GM12878 (cell line): ENCODE measurements at regions of chr3 and their contacts with region 1.

Region 1: GRCh38 chr3:36957862-36958686 is 13.2 kb upstream of the TRANK1 start:
- DNase-seq: no peak
- ATAC-seq: peak; percentile 20; the same call in 2 of the 3 replicates
- H3K4me3 ChIP-seq: no peak overlapping the region
- H3K27ac ChIP-seq: no peak overlapping the region
- H3K4me1 ChIP-seq: no peaks in the 10 kb centered on the region
- H3K27me3 ChIP-seq: no peaks in the 10 kb centered on the region
- CTCF ChIP-seq: no peak
- EP300 ChIP-seq: no peak
- POLR2A ChIP-seq: no peak
- RAD21 ChIP-seq: no peak

Region 2: DNA sequence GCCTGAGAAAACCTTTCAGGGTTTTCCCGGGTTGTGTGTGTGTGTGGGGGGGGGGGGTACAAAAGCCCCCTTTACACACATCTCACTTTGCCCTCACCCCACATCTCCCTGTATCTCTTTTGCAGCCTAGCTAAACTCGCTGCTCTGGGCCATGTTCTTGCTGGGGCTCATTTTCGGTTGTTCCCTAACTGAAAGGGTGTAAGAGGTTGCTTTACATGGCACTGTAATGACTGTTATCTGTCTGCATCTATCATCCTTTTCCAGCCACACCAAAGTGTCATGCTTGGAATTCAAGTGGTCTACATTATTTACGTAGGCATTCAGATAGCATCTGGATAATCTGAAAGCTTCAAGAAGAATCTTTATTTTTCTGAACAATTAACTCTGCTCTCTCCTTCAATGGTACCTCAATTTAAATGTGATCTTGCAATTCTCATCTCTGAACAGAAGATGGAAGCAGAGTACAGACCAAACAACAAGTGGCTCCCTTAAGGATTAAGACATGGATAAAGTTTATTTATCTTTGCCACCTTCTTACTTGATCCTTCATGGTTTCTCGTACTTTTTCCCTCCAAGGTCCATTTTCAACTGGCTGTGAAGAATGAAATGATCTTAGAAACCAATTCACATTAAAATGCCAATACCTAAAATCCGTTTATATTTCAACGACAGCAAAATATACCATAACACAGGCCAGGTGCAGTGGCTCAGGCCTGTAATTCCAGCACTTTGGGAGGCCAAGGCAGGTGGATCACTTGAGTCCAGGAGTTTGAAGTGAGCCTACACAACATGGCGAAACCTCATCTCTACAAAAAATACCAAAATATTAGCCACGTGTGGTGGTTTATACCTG is 228.6 kb before region 1 on chr3:
- CTCF ChIA-PET with region 1: interaction called, 68 read pairs
- POLR2A ChIA-PET with region 1: no interaction called
- RAD21 ChIA-PET with region 1: interaction called, 16 read pairs
- SMC1A ChIA-PET with region 1: interaction called, 25 read pairs
- in situ Hi-C with region 1: loop called (anchors 5 kb)
- intact Hi-C with region 1: loop called (anchors 1 kb)
- DNase-seq: no peak
- ATAC-seq: peak; percentile 77
- H3K4me3 ChIP-seq: no peak overlapping the region
- H3K27ac ChIP-seq: no peak overlapping the region
- H3K4me1 ChIP-seq: no peaks in the 10 kb centered on the region
- H3K27me3 ChIP-seq: no peaks in the 10 kb centered on the region
- CTCF ChIP-seq: peak; percentile 56 to 79 (median 65)
- EP300 ChIP-seq: no peak
- POLR2A ChIP-seq: no peak
- RAD21 ChIP-seq: peak; percentile 90

Region 3: DNA sequence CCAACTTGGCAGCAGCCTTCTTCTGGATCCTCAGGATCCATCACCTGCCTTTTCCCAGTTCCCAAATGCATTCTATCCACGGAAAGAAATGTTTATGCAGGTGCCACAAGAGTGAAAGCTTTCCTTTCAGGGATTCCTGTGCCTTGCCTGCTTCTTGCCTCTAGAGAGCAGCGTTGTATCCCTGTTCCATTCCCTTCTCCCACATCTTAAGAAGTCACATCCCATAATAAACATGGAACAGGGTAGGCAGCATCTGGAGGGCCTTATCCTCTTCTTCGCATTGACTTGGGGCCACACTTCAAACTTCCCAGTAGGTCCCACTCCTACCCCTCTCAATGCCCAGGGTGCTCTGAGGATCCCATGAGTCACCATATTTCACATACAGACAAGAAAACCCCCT is 121.0 kb before region 1 on chr3:
- CTCF ChIA-PET with region 1: interaction called, 16 read pairs
- POLR2A ChIA-PET with region 1: no interaction called
- RAD21 ChIA-PET with region 1: interaction called, 5 read pairs
- SMC1A ChIA-PET with region 1: interaction called, 5 read pairs
- in situ Hi-C with region 1: no loop called
- intact Hi-C with region 1: no loop called
- DNase-seq: no peak
- ATAC-seq: no peak
- H3K4me3 ChIP-seq: no peak overlapping the region
- H3K27ac ChIP-seq: no peak overlapping the region
- H3K4me1 ChIP-seq: no peaks in the 10 kb centered on the region
- H3K27me3 ChIP-seq: no peaks in the 10 kb centered on the region
- CTCF ChIP-seq: peak in 2 of 3 experiments; percentile 9 to 28; a peak in 1 of 6 replicates
- EP300 ChIP-seq: no peak
- POLR2A ChIP-seq: no peak
- RAD21 ChIP-seq: peak; percentile 32

Region 4: GRCh38 chr3:36876181-36876936 is 81.7 kb before region 1 on chr3:
- CTCF ChIA-PET with region 1: interaction called, 54 read pairs
- POLR2A ChIA-PET with region 1: interaction called, 4 read pairs
- RAD21 ChIA-PET with region 1: interaction called, 17 read pairs
- SMC1A ChIA-PET with region 1: interaction called, 24 read pairs
- in situ Hi-C with region 1: no loop called
- intact Hi-C with region 1: no loop called
- DNase-seq: peak; percentile 89
- ATAC-seq: peak; percentile 99
- H3K4me3 ChIP-seq: peak overlapping the region; percentile 12; the same call in 1 of the 2 replicates
- H3K27ac ChIP-seq: peak overlapping the region; percentile 45; the same call in 1 of the 2 replicates
- H3K4me1 ChIP-seq: peaks cover 11% of the 10 kb centered on the region
- H3K27me3 ChIP-seq: no peaks in the 10 kb centered on the region
- CTCF ChIP-seq: no peak
- EP300 ChIP-seq: peak; percentile 79 to 84; a peak in 3 of 4 replicates
- POLR2A ChIP-seq: no peak
- RAD21 ChIP-seq: no peak

Region 5: DNA sequence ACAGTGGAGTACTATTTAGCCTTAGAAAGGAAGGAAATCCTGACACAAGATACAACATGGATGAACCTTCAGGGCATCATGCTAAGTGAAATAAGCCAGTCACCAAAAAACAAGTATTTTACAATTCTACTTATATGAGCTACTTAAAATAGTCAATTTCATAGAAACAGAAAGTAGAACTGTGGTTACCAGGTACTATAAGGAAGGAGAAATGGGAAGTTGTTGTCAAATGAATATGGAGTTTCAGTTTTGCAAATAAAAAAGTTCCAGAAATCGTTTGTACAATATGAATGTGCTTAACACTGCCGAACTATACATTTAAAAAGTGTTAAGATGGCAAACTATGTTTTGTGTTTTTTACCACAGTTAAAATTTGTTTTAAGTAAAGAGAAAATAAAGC is 40.0 kb before region 1 on chr3:
- CTCF ChIA-PET with region 1: interaction called, 14 read pairs
- POLR2A ChIA-PET with region 1: no interaction called
- RAD21 ChIA-PET with region 1: interaction called, 14 read pairs
- SMC1A ChIA-PET with region 1: interaction called, 18 read pairs
- in situ Hi-C with region 1: no loop called
- intact Hi-C with region 1: no loop called
- DNase-seq: peak; percentile 48
- ATAC-seq: peak; percentile 85
- H3K4me3 ChIP-seq: no peak overlapping the region
- H3K27ac ChIP-seq: no peak overlapping the region
- H3K4me1 ChIP-seq: peaks cover 14% of the 10 kb centered on the region
- H3K27me3 ChIP-seq: no peaks in the 10 kb centered on the region
- CTCF ChIP-seq: no peak
- EP300 ChIP-seq: 0 out of 4 replicates have a peak, but pooled peaks have one; percentile 24 to 50
- POLR2A ChIP-seq: no peak
- RAD21 ChIP-seq: no peak

Region 6: GRCh38 chr3:36988356-36988755 is 30.3 kb after region 1 on chr3:
- CTCF ChIA-PET with region 1: interaction called, 39 read pairs
- POLR2A ChIA-PET with region 1: interaction called, 3 read pairs
- RAD21 ChIA-PET with region 1: interaction called, 11 read pairs
- SMC1A ChIA-PET with region 1: interaction called, 19 read pairs
- in situ Hi-C with region 1: no loop called
- intact Hi-C with region 1: no loop called
- DNase-seq: no peak
- ATAC-seq: no peak
- H3K4me3 ChIP-seq: peak overlapping the region; percentile 45; the same call in 1 of the 2 replicates
- H3K27ac ChIP-seq: peak overlapping the region; percentile 15; the same call in 1 of the 2 replicates
- H3K4me1 ChIP-seq: no peaks in the 10 kb centered on the region
- H3K27me3 ChIP-seq: no peaks in the 10 kb centered on the region
- CTCF ChIP-seq: no peak
- EP300 ChIP-seq: no peak
- POLR2A ChIP-seq: no peak
- RAD21 ChIP-seq: no peak

Region 7: GRCh38 chr3:37347941-37348340 is 389.9 kb after region 1 on chr3:
- CTCF ChIA-PET with region 1: no interaction called
- POLR2A ChIA-PET with region 1: no interaction called
- RAD21 ChIA-PET with region 1: no interaction called
- SMC1A ChIA-PET with region 1: no interaction called
- in situ Hi-C with region 1: no loop called
- intact Hi-C with region 1: no loop called
- DNase-seq: no peak
- ATAC-seq: no peak
- H3K4me3 ChIP-seq: no peak overlapping the region
- H3K27ac ChIP-seq: no peak overlapping the region
- H3K4me1 ChIP-seq: no peaks in the 10 kb centered on the region
- H3K27me3 ChIP-seq: no peaks in the 10 kb centered on the region
- CTCF ChIP-seq: no peak
- EP300 ChIP-seq: no peak
- POLR2A ChIP-seq: no peak
- RAD21 ChIP-seq: no peak